Sciatic nerve (tissue), 2 donors: ENCODE measurements at regions of chr20 and their contacts with region 1.

Region 1: GRCh38 chr20:5328268-5328667 is 11.5 kb upstream of the PROKR2 start:
- DNase-seq: no peak
- ATAC-seq: no peak

Region 2: DNA sequence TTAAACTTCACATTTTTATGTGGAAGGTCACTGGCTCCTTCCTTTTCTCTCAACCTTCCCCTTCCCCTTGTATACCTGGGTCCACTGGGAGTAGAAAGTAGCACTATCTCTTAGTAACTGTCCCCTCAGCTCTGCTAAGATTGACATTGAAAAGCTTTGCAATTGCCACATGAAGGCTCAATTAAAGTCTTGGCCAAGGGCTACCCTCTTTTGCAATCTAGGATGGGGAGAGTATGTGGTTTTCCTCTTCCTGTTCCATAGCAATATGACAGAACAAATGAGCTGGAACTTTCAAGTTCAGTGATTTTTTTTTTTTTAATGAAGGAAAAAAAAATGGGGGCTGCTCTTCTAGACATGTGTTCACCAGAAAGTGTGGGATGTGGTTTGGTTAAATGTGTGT is 48.6 kb before region 1 on chr20:
- intact Hi-C with region 1: no loop called
- DNase-seq: no peak
- ATAC-seq: no peak

Region 3: DNA sequence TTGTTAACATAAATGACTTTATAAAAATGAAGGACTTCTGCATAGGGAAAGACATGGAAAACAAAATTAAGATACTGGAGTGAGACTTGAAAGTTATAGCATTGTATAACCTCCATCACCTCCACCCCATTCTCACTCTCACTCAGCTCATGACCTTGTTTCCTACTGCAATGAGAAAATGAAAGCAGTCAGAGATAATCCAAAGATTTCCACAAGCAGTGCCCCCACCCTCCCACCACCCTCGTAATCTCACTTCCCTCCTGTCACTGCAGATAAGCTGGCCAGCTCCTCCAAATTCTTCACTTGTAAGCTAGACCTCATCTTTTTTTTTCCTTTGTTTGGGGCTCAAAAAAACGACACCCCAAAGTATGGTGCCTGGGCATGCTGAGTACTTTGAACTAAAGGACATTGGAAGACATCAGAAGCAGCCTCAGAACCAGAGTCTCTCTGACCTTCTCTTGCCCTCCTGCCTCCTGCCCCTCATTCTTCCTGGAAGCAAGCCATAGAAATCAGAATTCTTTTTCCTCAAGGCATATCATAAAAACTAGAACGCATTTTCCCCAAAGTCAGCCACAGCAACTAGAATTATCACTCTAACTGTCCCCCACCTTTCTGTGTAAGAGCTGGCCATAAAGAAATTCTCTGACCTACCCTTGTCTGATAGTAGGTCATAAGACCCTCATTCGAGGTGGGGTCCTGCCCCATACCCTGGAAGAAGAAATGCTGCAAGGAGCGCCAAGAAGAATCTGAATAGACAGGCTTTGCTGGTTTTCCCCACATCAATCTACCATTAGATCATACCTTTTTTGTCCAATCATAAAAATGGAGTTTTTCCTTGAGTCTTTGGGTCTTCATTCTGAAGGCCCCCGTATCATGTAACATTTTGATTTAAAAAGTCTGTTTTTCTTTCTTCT is 41.6 kb after region 1 on chr20:
- intact Hi-C with region 1: loop called (anchors 2 kb)
- DNase-seq: no peak
- ATAC-seq: no peak